Panc1 (cell line): ENCODE measurements at regions of chr4 and their contacts with region 1.

Region 1: GRCh38 chr4:120049732-120050494 is 16.7 kb downstream of the MAD2L1 start:
- DNase-seq: peak; percentile 83
- ATAC-seq: peak; percentile 96
- H3K4me3 ChIP-seq: peak overlapping the region in 1 of 2 experiments; percentile 48; a peak in 2 of 4 replicates
- H3K27ac ChIP-seq: peak overlapping the region; percentile 92
- H3K4me1 ChIP-seq: peaks cover 6% of the 10 kb centered on the region
- H3K27me3 ChIP-seq: no peaks in the 10 kb centered on the region
- CTCF ChIP-seq: peak; percentile 81

Region 2: GRCh38 chr4:119559044-119559647 is 490.8 kb before region 1 on chr4:
- CTCF ChIA-PET with region 1: no interaction called
- POLR2A ChIA-PET with region 1: no interaction called
- in situ Hi-C with region 1: no loop called
- intact Hi-C with region 1: loop called (anchors 10 kb)
- DNase-seq: peak; percentile 15
- ATAC-seq: no peak
- H3K4me3 ChIP-seq: no peak overlapping the region
- H3K27ac ChIP-seq: no peak overlapping the region
- H3K4me1 ChIP-seq: no peaks in the 10 kb centered on the region
- H3K27me3 ChIP-seq: no peaks in the 10 kb centered on the region
- CTCF ChIP-seq: peak; percentile 44; the same call in 1 of the 2 replicates

Region 3: GRCh38 chr4:119729835-119730670 is 319.9 kb before region 1 on chr4:
- CTCF ChIA-PET with region 1: no interaction called
- POLR2A ChIA-PET with region 1: no interaction called
- in situ Hi-C with region 1: no loop called
- intact Hi-C with region 1: loop called (anchors 1 kb)
- DNase-seq: peak; percentile 81
- ATAC-seq: peak; percentile 94
- H3K4me3 ChIP-seq: no peak overlapping the region
- H3K27ac ChIP-seq: peak overlapping the region; percentile 98
- H3K4me1 ChIP-seq: peaks cover 23% of the 10 kb centered on the region
- H3K27me3 ChIP-seq: no peaks in the 10 kb centered on the region
- CTCF ChIP-seq: no peak

Region 4: GRCh38 chr4:119794704-119795103 is 255.2 kb before region 1 on chr4:
- CTCF ChIA-PET with region 1: no interaction called
- POLR2A ChIA-PET with region 1: no interaction called
- in situ Hi-C with region 1: no loop called
- intact Hi-C with region 1: loop called (anchors 10 kb)
- DNase-seq: no peak
- ATAC-seq: no peak
- H3K4me3 ChIP-seq: no peak overlapping the region
- H3K27ac ChIP-seq: peak overlapping the region; percentile 23; the same call in 1 of the 2 replicates
- H3K4me1 ChIP-seq: no peaks in the 10 kb centered on the region; the same call in 1 of the 2 replicates
- H3K27me3 ChIP-seq: no peaks in the 10 kb centered on the region
- CTCF ChIP-seq: no peak

Region 5: DNA sequence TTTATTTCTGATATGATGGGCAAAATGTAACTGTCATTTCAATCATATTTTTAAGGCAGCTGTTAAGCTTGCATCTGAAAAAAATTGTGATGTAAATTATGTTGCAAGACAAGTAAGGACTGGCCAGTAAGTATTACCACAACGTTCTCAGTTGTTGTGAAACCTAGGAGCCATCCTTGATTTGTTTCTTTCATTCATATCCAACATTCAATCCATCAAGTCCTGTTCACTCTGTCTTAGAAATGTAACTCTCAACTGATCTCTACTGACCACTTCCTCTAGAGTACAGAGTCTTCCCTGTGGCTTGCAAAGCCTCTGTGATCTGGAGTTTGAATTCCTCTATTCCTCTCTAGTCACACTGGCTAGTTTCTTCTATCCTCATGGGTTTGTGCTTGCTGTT is 178.2 kb after region 1 on chr4:
- CTCF ChIA-PET with region 1: no interaction called
- POLR2A ChIA-PET with region 1: no interaction called
- in situ Hi-C with region 1: no loop called
- intact Hi-C with region 1: no loop called
- DNase-seq: no peak
- ATAC-seq: no peak
- H3K4me3 ChIP-seq: no peak overlapping the region
- H3K27ac ChIP-seq: no peak overlapping the region
- H3K4me1 ChIP-seq: no peaks in the 10 kb centered on the region
- H3K27me3 ChIP-seq: no peaks in the 10 kb centered on the region
- CTCF ChIP-seq: no peak